Left cardiac atrium (tissue), 4 donors: ENCODE measurements at regions of chr6 and their contacts with region 1.

Region 1: GRCh38 chr6:42929821-42930360 is 611 bp downstream of the CNPY3 start:
- DNase-seq: peak; percentile 32
- ATAC-seq: peak; percentile 10 to 27

Region 2: GRCh38 chr6:42190554-42191183 is 739.2 kb before region 1 on chr6:
- intact Hi-C with region 1: no loop called
- DNase-seq: no peak
- ATAC-seq: peak in 1 of 2 donors; percentile 74

Region 3: DNA sequence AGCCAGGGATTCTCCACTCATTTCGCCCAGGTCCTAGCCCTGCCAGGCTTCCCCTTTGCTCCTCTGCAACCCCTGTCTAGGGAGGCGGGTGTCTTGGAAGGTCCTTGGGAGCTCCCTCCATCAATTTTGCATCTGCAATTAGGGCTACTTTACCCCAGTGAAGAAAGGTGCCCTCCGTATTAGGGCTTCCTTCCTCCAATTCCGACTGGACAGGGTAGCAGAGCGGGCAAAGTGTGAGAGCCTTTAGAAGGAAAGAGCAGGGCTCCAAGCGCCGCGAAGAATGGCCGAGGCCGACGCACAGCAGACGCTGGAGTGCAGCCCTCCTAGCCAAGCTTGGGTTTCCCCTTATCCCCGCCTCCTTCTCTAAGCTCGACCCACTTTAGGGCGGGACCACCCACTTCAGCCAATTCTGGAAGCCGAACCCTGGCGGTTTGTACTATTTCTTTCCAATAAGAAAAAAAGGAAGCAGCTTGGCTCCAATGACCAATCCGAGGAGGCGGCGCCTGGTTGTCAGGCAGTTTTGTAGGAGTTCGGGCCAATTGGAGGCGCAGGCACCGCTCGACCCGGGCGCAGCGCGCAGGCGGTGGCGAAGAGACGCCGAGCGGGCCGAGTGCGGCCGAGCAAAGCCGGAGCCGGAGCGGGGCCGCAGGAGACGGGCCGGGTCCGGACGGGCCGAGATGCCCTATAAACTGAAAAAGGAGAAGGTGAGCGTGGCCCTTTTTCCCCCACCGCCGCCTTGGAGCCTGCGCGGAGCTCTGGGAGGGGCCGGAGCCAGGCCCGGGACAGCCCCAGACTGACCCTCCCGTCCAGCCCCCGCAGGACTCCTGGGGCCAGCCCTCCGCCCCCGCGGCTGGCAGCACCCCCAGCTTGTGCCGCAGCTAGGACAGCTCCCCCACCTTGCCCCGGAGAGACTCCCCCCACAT is 54.4 kb after region 1 on chr6 and contains the start of gene PPP2R5D:
- intact Hi-C with region 1: loop called in 1 of 2 experiments (anchors 5 kb)
- DNase-seq: peak; percentile 98
- ATAC-seq: peak; percentile 96 to 97
- total RNA-seq, gene PPP2R5D: 25.2 to 30.2 TPM

Region 4: GRCh38 chr6:43120944-43121913 is 191.3 kb after region 1 on chr6:
- intact Hi-C with region 1: no loop called
- DNase-seq: peak; percentile 75
- ATAC-seq: peak; percentile 77 to 87